Aorta (tissue), 5 donors: ENCODE measurements at regions of chr12 and their contacts with region 1.

Region 1: DNA sequence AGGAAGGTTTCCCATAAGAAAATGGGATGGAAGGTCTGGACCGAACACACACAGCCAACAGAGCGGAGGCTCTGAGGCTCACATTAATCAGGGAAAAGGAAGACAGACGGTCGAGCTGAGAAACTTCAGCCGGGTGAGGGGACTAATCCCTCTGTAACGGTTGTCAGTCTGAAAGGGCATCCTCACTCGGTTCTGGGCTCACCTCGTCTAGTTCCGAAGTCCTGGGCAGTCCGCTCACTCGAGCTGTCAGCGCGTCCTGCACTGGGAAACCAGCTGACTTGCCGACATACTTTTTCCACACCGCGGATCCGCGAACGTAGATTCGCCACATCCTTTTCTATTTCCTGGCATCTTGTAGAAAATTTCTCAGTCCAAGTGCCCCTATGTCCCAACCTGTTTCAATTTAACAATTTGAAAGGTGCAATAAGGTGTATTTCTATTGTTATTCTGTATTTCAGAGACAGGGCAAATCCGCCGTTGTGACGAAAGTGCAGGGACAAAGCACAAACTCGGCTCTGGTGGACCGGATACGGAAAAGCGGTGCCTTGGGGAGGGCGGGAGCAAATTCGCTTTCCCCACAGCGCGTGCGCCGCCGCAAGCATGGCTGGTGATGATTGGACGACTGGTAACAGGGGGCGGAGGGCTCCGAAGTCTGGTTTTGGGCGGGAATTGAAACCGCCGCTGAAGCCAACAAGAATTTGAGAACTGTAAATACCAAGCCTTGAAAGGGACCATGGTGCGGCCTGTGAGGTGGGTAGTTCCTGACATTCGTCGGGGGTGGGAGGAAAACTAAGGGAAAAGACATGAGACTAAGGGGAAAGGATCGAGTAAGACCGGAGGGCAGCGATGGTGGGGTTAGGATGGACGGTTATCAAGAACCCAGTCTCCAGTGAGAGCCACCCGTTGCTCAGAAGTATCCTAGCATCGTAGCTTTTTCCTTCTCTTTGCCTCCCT is at the start of gene RAD51AP1:
- DNase-seq: peak; percentile 97
- ATAC-seq: peak; percentile 100
- H3K4me3 ChIP-seq: peak within 1 kb of the TSS; percentile 67 to 89
- H3K27ac ChIP-seq: peak within 1 kb of the TSS; percentile 47 to 96
- H3K4me1 ChIP-seq: peaks cover 0 to 3% of the 10 kb centered on the region in 2 donors
- H3K27me3 ChIP-seq: no peaks in the 10 kb centered on the region
- total RNA-seq, gene RAD51AP1: 1.2 to 2.8 TPM

Region 2: DNA sequence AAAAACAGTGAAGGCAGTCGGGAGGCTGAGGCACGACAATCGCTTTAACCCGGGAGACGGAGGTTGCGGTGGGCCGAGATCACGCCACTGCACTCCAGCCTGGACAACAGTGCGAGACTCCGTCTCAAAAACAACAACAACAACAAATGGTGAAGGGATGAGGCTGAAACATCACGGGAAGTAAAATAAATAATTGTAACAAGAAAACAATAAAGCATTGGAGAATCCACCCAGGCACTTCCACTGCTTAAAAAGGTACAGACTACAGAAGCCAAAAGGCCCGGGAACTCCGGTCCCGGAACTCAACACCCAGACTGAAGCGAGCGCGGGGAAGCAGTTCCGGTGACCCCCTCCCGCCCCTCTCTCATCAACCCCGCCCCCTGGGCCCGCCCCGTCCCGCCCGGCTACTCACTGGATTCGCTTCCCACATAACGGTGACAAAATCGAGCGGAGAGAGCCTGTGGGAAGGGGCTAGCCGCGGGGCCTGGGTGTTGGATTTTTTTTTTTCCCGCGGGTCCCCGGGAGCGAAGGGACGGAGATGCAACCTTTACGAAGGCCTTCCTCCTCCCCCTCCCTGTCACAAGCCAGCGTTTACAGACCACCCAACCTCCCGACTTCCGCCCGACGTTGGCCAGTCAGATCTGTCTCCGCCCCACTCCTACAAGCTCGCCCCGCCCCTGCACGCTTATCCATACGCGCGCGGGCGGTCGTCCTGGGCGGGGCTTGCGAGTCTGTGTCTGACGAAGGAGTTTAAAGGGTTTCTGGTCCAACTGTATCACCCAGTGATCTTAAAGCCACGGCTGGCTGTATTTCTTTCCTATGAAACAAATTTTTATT is 665.5 kb before region 1 on chr12 and contains the start of gene PARP11:
- intact Hi-C with region 1: loop called in 1 of 2 experiments (anchors 10 kb)
- DNase-seq: peak; percentile 99
- ATAC-seq: peak; percentile 100
- H3K4me3 ChIP-seq: peak within 1 kb of the TSS; percentile 97 to 98
- H3K27ac ChIP-seq: peak within 1 kb of the TSS; percentile 72 to 87
- H3K4me1 ChIP-seq: peaks cover 4 to 7% of the 10 kb centered on the region in 2 donors
- H3K27me3 ChIP-seq: no peaks in the 10 kb centered on the region
- total RNA-seq, gene PARP11: 11.9 to 18.2 TPM

Region 3: GRCh38 chr12:4307593-4308333 is 230.7 kb before region 1 on chr12:
- intact Hi-C with region 1: loop called in 1 of 2 experiments (anchors 10 kb)
- DNase-seq: peak in 1 of 2 donors; percentile 81
- ATAC-seq: peak; percentile 90
- H3K4me3 ChIP-seq: no peak overlapping the region
- H3K27ac ChIP-seq: no peak overlapping the region
- H3K4me1 ChIP-seq: no peaks in the 10 kb centered on the region
- H3K27me3 ChIP-seq: no peaks in the 10 kb centered on the region

Region 4: GRCh38 chr12:4330203-4330602 is 208.3 kb before region 1 on chr12:
- intact Hi-C with region 1: no loop called
- DNase-seq: no peak
- ATAC-seq: no peak
- H3K4me3 ChIP-seq: no peak overlapping the region
- H3K27ac ChIP-seq: no peak overlapping the region
- H3K4me1 ChIP-seq: peaks cover 0 to 2% of the 10 kb centered on the region in 2 donors
- H3K27me3 ChIP-seq: no peaks in the 10 kb centered on the region

Region 5: DNA sequence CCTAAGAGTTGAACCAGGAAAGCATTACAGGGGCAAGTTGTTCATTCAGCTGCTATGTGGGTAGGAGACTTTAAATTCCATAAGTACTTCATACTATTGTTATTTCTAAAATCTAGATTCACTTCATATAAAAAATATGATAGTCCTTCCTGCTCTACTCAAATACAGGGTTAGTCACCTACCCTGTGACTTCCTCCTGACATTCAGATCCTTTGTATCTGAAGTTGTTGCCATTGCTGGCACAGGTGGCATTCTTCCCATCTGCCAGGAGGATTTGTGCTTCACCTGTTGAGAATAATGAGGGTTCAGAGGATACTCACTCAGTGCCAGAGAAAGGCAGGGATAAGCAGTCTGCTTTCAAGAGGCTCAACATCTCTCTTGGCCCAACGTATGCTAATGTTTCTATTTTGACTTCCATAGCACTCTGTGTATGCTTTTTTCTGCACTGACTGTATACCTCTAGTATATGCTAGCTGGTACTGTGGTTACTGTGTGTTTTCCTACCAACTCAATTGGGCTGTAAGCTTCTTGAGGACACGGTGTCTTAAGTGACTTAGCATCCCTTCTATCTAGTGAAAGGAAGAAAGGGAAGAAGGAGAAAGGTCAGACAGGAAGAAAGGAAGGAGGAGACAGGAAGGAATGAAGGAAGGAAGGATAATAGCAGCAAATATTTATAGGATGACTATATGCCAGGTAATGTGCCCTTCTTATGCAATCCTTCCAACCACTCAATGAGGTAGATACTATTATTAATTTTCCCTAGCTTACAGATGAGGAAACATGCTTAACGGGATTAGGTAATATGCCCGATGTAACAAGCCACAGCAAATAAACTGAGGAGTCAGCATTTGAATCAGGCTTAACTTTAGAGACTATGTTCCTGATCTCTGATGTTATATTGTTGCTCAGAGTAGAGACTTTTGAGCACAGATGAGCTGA is 54.3 kb before region 1 on chr12:
- intact Hi-C with region 1: no loop called
- DNase-seq: no peak
- ATAC-seq: no peak
- H3K4me3 ChIP-seq: no peak overlapping the region
- H3K27ac ChIP-seq: no peak overlapping the region
- H3K4me1 ChIP-seq: no peaks in the 10 kb centered on the region
- H3K27me3 ChIP-seq: no peaks in the 10 kb centered on the region

Region 6: DNA sequence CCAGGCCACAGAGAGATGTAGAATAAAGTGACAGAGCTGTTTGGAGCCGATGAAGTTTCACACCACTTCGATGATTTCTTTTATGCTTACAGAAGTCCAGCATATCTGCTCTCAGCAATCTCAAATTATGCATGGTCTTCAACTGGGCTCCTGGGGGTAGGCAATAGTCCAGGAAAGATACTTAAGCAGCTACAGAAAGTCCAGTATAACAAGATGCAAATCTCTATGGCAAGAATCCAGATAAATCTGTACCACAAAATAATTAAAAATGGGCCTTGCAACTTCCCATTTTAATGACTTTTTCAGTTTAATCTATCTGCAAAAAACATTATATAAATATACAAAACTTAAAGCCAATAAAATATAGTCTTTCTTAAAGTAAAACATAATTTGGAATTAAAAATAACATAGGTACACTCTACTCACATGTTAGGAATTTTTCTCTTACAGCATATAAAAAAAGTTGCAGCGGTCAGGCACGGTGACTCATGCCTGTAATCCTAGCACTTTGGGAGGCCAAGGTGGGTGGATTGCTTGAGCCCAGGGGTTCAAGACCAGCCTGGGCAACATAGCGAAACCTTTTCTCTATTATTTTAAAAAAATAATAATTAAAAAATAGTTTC is 20.3 kb before region 1 on chr12:
- intact Hi-C with region 1: loop called in 1 of 2 experiments (anchors 2 kb)
- DNase-seq: no peak
- ATAC-seq: no peak
- H3K4me3 ChIP-seq: no peak overlapping the region
- H3K27ac ChIP-seq: no peak overlapping the region
- H3K4me1 ChIP-seq: no peaks in the 10 kb centered on the region
- H3K27me3 ChIP-seq: no peaks in the 10 kb centered on the region

Region 7: DNA sequence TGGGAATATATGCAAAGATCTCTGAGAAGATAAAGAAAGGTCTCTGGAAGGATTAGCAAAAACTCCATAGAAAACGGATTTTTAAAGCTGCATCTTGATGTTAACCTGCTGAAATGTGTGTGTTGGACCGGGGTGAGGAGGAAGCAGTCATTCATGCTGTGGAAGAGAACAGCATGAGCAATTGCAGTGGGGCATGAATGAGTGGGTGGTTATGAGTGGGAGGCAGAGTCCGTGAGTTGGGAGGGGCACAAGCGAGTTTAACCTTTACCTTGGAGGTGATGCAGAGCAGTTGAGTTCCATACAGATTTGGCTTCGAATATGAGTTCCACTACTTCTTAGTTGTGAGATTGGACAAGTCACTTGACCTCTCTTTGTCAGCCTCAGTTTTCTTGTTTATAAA is 152.3 kb after region 1 on chr12:
- intact Hi-C with region 1: no loop called
- DNase-seq: no peak
- ATAC-seq: no peak
- H3K4me3 ChIP-seq: no peak overlapping the region
- H3K27ac ChIP-seq: no peak overlapping the region
- H3K4me1 ChIP-seq: no peaks in the 10 kb centered on the region
- H3K27me3 ChIP-seq: no peaks in the 10 kb centered on the region